ENCODE measurements at regions of chr19 and their contacts with region 1.

Region 1: GRCh38 chr19:38335949-38336637 is 463 bp downstream of the CATSPERG start:
- DNase-seq: peak; percentile 98
- H3K4me3 ChIP-seq: peak overlapping the region; percentile 57 to 93 (median 80)
- H3K27ac ChIP-seq: peak overlapping the region; percentile 76 to 98 (median 96)
- H3K4me1 ChIP-seq: peaks cover 7 to 29% (median 21%) of the 10 kb centered on the region in 6 donors
- H3K27me3 ChIP-seq: no peaks in the 10 kb centered on the region
- CTCF ChIP-seq: peak in 1 of 11 experiments; percentile 9
- POLR2A ChIP-seq: peak in 1 of 3 donors; percentile 24

Region 2: DNA sequence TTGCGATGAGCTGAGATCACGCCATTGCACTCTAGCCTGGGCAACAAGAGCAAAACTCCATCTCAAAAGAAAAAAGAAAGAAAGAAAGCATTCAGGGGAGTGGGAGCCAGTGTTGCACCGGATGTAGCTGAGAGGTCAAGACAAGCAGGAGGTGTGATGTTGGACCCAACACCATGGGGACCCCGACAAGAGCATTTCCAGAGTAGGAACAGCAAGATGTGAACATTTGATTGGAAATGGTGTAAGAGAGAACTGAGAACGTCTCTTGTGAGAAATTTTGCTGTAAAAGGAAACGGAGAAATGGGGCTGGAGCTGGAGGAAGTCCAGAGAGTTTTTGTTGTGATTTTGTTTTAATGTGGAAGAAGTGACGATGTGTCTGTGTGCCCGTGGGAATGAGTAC is 96.3 kb before region 1 on chr19:
- intact Hi-C with region 1: loop called (anchors 5 kb)
- DNase-seq: no peak
- H3K4me3 ChIP-seq: no peak overlapping the region
- H3K27ac ChIP-seq: no peak overlapping the region
- H3K4me1 ChIP-seq: peaks cover 0 to 21% (median 9%) of the 10 kb centered on the region in 6 donors
- H3K27me3 ChIP-seq: no peaks in the 10 kb centered on the region
- CTCF ChIP-seq: no peak
- POLR2A ChIP-seq: no peak

Region 3: DNA sequence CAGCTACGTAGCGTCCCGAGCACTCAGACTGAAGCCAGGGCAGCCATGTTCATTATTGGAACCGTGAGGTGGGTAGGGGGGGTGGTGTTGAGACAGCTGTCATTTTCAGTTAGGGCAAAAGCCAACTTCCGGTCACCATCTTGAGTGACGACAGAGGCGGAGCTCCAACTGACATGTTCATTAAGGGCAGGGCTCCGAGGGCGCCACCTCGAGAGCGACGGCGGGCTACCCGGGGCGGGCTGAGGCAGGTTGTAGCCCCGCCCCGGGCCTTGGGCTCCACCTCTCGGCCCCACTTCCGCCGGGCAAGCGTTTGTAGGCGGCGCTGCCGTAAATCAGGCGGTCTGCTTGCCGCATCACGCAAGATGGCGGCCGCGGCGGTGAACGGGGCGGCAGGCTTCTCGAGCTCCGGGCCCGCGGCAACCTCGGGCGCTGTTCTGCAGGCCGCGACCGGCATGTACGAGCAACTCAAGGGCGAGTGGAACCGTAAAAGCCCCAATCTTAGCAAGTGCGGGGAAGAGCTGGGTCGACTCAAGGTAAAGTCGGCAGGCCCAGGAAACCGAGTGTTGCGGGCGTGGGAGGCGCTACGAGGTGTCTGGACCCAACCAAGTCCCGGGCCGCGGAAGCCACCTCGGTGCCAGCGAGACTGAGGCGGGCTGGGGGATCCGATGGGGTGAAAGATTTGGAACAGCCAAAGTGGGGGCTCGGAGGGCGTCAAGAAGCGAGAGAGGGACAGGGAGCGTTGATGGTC is 38.5 kb after region 1 on chr19 and contains the start of gene PSMD8:
- intact Hi-C with region 1: loop called (anchors 5 kb)
- DNase-seq: peak; percentile 100
- H3K4me3 ChIP-seq: peak within 1 kb of the TSS; percentile 72 to 92 (median 87)
- H3K27ac ChIP-seq: peak within 1 kb of the TSS; percentile 88 to 97 (median 92)
- H3K4me1 ChIP-seq: peaks cover 12 to 40% (median 26%) of the 10 kb centered on the region in 6 donors
- H3K27me3 ChIP-seq: no peaks in the 10 kb centered on the region
- CTCF ChIP-seq: peak in 9 of 11 experiments; percentile 5 to 78 (median 49)
- POLR2A ChIP-seq: peak; percentile 78 to 84 (median 83)
- total RNA-seq, gene PSMD8: 80.1 to 144 (median 85.1) TPM

Measured in spleen (tissue), 13 donors.